B cell (primary cell): ENCODE measurements at regions of chr3 and their contacts with region 1.

Region 1: DNA sequence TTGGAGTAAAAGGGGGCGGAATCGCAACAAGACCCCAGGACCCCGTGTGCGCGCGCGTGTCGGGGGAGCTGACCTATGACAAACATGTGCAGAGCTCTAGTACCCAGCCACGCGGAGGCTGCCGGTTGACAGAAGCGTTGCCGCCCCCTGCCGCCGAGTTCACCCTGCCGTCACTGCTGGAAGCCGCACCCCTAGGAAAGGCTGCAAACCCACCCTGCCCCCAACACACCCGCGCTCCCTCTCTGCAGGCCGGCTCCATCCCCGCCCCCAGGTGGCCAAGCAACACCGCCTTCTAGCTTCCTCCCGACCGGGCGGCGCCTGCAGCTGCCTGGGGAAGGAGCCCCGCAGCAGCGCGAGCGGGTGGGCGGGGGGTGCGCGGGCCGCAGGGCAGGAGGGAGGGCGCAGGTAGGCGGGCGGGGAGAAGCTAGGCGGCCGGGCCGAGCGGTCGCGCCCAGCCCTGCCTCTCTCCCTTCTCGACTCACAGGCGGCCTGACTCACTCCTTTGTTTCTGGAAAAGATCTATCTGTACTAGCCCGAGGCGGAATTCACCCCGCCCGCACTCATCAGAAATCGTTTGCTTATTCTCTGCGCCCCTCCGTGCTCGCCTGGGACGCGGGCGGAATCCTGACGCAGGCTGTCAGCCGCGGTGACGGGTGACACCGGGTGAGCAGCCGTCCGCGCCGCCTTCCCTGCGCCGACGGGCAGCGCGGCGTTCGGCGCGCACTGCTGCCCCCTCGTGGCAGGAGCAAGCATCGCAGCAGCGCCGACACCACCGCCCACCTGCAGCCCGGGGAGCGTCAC is 160.8 kb downstream of the GAP43 start:
- DNase-seq: peak; percentile 94
- ATAC-seq: peak; percentile 81
- H3K4me3 ChIP-seq: peak overlapping the region in 4 of 5 experiments; percentile 60 to 74 (median 70)
- H3K4me3 Mint-ChIP-seq: peak overlapping the region; percentile 87
- H3K27ac ChIP-seq: peak overlapping the region; percentile 94 to 95
- H3K27ac Mint-ChIP-seq: peak overlapping the region; percentile 95
- H3K4me1 ChIP-seq: peaks cover 13 to 16% of the 10 kb centered on the region in 2 donors
- H3K4me1 Mint-ChIP-seq: peaks cover 15% of the 10 kb centered on the region
- H3K27me3 ChIP-seq: peaks cover 0 to 11% (median 4%) of the 10 kb centered on the region in 4 experiments
- H3K27me3 Mint-ChIP-seq: peaks cover 9% of the 10 kb centered on the region
- CTCF ChIP-seq: peak; percentile 95

Region 2: DNA sequence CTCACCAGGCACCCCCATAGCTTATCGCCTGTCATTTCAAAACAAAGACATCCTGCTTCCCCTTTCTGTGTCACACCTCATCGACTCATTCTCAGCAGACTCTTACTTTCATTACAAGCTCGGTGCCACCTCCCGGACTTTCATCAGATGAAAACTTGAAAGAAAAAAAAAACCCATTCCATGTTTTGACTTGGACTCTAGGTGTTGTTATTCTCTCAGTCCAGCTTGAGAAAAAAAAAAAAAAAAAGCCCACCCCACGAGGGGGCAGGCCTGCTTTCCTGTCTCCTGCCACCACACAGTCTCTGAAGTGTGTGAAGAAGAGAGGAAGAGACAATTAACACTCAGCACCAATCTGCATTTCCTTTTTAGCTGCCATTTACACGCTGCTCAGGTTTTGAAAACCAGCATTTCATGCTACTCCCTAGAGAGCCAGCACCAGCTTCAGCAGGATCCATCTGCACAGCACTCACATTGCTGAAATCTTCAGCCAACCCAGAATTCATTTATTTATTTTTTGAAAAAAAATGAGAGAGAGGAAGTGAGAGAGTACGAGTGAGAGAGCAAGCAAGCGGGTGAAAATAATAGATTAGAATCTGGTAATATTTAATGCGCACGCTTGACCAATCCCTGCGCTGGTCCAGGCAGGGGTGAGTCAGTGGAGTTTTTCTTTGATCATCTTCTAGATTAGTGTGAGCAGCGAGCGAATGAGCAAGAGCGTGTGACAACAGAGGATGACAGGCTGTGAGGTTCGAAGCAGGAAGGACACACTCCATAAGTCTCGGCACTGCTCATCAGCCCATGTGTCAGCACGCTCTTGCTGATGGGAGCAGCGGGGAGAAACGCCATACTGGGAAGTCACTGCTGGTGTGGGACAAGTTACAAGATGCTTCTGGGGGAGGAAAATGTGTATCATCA is 1570.3 kb before region 1 on chr3:
- CTCF ChIA-PET with region 1: no interaction called
- POLR2A ChIA-PET with region 1: no interaction called
- intact Hi-C with region 1: loop called (anchors 5 kb)
- DNase-seq: peak; percentile 92
- ATAC-seq: peak; percentile 76
- H3K4me3 ChIP-seq: peak overlapping the region; percentile 42 to 76 (median 69)
- H3K4me3 Mint-ChIP-seq: no peak overlapping the region
- H3K27ac ChIP-seq: peak overlapping the region; percentile 95 to 98
- H3K27ac Mint-ChIP-seq: no peak overlapping the region
- H3K4me1 ChIP-seq: peaks cover 66 to 71% of the 10 kb centered on the region in 2 donors
- H3K4me1 Mint-ChIP-seq: peaks cover 28% of the 10 kb centered on the region
- H3K27me3 ChIP-seq: no peaks in the 10 kb centered on the region
- H3K27me3 Mint-ChIP-seq: no peaks in the 10 kb centered on the region
- CTCF ChIP-seq: no peak

Region 3: DNA sequence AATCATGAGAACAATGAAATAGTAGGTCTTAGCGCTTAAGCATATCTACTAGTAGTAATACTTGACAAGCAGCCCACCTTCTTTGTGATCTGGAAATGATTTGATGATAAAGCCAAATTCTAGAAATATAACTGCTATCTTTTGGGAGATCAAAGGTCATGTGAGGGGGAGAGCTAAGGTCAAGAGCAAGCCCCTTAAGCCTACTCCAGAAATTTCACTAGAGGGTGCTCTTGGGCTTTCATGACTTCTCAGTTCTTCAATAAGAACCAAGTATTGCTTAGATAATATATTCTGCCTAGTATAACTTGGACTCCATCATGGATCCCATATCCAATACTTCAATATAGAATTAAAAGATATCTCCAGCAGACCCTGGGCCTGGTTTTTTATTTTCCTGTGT is 956.6 kb before region 1 on chr3:
- CTCF ChIA-PET with region 1: interaction called, 3 read pairs
- POLR2A ChIA-PET with region 1: no interaction called
- intact Hi-C with region 1: loop called (anchors 2 kb)
- DNase-seq: peak; percentile 49
- ATAC-seq: peak; percentile 31
- H3K4me3 ChIP-seq: no peak overlapping the region
- H3K4me3 Mint-ChIP-seq: no peak overlapping the region
- H3K27ac ChIP-seq: no peak overlapping the region
- H3K27ac Mint-ChIP-seq: no peak overlapping the region
- H3K4me1 ChIP-seq: no peaks in the 10 kb centered on the region
- H3K4me1 Mint-ChIP-seq: no peaks in the 10 kb centered on the region
- H3K27me3 ChIP-seq: no peaks in the 10 kb centered on the region
- H3K27me3 Mint-ChIP-seq: no peaks in the 10 kb centered on the region
- CTCF ChIP-seq: peak; percentile 62

Region 4: GRCh38 chr3:115092220-115092791 is 691.8 kb before region 1 on chr3:
- CTCF ChIA-PET with region 1: interaction called, 9 read pairs
- POLR2A ChIA-PET with region 1: no interaction called
- intact Hi-C with region 1: loop called (anchors 1 kb)
- DNase-seq: peak; percentile 69
- ATAC-seq: peak; percentile 33
- H3K4me3 ChIP-seq: no peak overlapping the region
- H3K4me3 Mint-ChIP-seq: no peak overlapping the region
- H3K27ac ChIP-seq: no peak overlapping the region
- H3K27ac Mint-ChIP-seq: no peak overlapping the region
- H3K4me1 ChIP-seq: no peaks in the 10 kb centered on the region
- H3K4me1 Mint-ChIP-seq: peaks cover 6% of the 10 kb centered on the region
- H3K27me3 ChIP-seq: no peaks in the 10 kb centered on the region
- H3K27me3 Mint-ChIP-seq: no peaks in the 10 kb centered on the region
- CTCF ChIP-seq: peak; percentile 82

Region 5: DNA sequence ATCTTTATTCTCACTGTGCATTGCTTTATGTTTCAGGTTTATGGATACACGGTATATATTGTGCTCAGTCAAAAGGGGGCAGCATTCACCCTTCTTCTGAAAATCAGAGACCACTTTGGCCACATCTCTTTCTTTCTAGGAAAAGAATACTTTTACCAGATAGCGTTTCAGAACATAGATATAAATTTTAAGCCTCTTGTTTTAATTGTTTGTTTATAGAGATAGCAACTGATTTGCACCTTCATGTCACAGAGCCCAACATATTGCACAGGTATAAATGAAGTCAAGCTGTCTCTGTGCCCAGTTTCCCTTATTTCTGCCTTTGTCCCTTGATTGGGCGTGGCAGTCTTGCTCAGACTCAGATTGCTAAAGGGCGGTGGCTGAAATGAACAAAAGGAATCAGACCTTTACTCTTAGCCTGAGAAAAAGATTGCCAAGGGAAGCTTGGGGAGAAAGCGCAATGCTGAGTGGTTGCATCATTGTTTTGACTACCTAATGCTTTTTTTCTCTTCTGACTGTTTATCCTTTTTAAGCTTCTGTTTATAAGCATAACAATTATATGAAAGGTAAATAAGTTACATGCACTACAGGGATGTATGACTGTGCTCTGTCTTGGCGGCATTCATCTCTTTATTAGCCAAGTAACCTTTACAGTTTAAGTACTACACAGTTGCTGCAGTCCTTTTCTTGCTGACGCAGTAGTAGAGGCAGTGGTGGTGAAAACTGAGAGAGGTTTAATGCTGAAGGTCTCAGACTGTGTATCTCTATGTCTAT is 566.3 kb before region 1 on chr3:
- CTCF ChIA-PET with region 1: interaction called, 20 read pairs
- POLR2A ChIA-PET with region 1: no interaction called
- intact Hi-C with region 1: loop called (anchors 1 kb)
- DNase-seq: peak; percentile 45
- ATAC-seq: no peak
- H3K4me3 ChIP-seq: no peak overlapping the region
- H3K4me3 Mint-ChIP-seq: no peak overlapping the region
- H3K27ac ChIP-seq: no peak overlapping the region
- H3K27ac Mint-ChIP-seq: no peak overlapping the region
- H3K4me1 ChIP-seq: peaks cover 5 to 6% of the 10 kb centered on the region in 2 donors
- H3K4me1 Mint-ChIP-seq: peaks cover 3% of the 10 kb centered on the region
- H3K27me3 ChIP-seq: peaks cover 0 to 7% (median 2%) of the 10 kb centered on the region in 4 experiments
- H3K27me3 Mint-ChIP-seq: peaks cover 23% of the 10 kb centered on the region
- CTCF ChIP-seq: peak; percentile 60

Region 6: DNA sequence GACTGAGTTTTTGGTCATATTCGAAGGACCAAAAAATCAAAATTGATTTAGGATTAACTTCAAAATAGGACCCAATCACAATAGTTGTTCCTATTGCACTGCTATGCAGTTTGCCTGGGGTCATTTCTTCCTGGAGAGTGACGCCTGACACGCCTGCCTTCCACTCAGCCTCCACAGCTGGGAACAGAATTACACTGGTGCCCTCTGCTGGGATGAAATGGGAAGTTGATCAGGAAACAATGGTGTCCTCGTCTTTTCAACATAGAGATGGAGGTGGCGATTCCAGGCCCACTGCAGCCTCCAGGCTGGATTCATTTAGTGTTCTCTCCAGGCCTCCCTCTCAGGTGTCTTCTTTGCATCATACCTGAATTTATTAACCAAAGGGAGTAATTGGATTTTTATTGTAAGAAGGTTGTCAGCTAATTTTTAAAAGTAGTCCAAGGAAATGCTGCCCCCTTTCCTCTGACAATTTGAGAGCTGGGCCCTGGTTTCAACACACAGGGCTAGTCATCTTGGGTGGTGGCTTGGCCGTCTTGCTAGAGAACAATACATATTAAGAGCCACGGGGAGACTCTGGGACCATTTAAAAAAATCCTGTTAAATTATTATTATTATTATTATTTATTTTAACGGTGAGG is 91.1 kb before region 1 on chr3:
- CTCF ChIA-PET with region 1: interaction called, 13 read pairs
- POLR2A ChIA-PET with region 1: no interaction called
- intact Hi-C with region 1: loop called (anchors 2 kb)
- DNase-seq: peak; percentile 79
- ATAC-seq: peak; percentile 94
- H3K4me3 ChIP-seq: no peak overlapping the region
- H3K4me3 Mint-ChIP-seq: no peak overlapping the region
- H3K27ac ChIP-seq: no peak overlapping the region
- H3K27ac Mint-ChIP-seq: no peak overlapping the region
- H3K4me1 ChIP-seq: no peaks in the 10 kb centered on the region
- H3K4me1 Mint-ChIP-seq: no peaks in the 10 kb centered on the region
- H3K27me3 ChIP-seq: no peaks in the 10 kb centered on the region
- H3K27me3 Mint-ChIP-seq: peaks cover 4% of the 10 kb centered on the region
- CTCF ChIP-seq: peak; percentile 85

Region 7: DNA sequence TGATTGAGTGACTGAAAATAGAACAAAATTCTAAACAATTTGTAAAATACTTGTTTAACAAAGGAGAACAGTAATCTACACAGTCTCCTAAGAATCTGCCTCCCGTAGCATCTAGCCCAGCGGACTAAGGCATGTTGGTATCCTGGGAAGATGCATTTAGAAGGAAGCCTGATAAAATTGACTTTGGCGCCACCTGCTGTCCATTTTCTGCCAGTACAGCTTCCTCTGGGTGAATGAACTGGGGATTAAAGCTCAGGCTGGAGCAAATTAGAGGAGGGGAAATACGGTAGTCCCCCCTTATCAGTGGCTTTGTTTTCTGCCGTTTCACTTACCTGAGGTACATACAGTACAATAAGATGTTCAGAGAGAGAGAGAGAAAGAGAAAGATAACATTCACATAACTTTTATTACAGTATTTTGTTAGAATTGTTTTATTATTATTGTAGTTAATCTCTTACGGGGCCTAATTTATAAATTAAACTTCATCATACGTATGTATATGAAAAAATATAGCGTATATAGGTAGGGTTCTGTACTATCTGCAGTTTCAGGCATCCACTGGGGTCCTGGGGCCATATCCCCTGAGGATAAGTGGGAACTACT is 30.7 kb after region 1 on chr3:
- CTCF ChIA-PET with region 1: interaction called, 12 read pairs
- POLR2A ChIA-PET with region 1: no interaction called
- intact Hi-C with region 1: loop called (anchors 2 kb)
- DNase-seq: peak; percentile 71
- ATAC-seq: peak; percentile 65
- H3K4me3 ChIP-seq: no peak overlapping the region
- H3K4me3 Mint-ChIP-seq: no peak overlapping the region
- H3K27ac ChIP-seq: no peak overlapping the region
- H3K27ac Mint-ChIP-seq: no peak overlapping the region
- H3K4me1 ChIP-seq: no peaks in the 10 kb centered on the region
- H3K4me1 Mint-ChIP-seq: no peaks in the 10 kb centered on the region
- H3K27me3 ChIP-seq: no peaks in the 10 kb centered on the region
- H3K27me3 Mint-ChIP-seq: no peaks in the 10 kb centered on the region
- CTCF ChIP-seq: peak; percentile 99

Region 8: GRCh38 chr3:115836944-115837343 is 52.8 kb after region 1 on chr3:
- CTCF ChIA-PET with region 1: no interaction called
- POLR2A ChIA-PET with region 1: no interaction called
- intact Hi-C with region 1: no loop called
- DNase-seq: peak; percentile 13
- ATAC-seq: no peak
- H3K4me3 ChIP-seq: no peak overlapping the region
- H3K4me3 Mint-ChIP-seq: no peak overlapping the region
- H3K27ac ChIP-seq: no peak overlapping the region
- H3K27ac Mint-ChIP-seq: no peak overlapping the region
- H3K4me1 ChIP-seq: no peaks in the 10 kb centered on the region
- H3K4me1 Mint-ChIP-seq: no peaks in the 10 kb centered on the region
- H3K27me3 ChIP-seq: peaks cover 0 to 4% (median 0%) of the 10 kb centered on the region in 4 experiments
- H3K27me3 Mint-ChIP-seq: peaks cover 3% of the 10 kb centered on the region
- CTCF ChIP-seq: peak; percentile 70

Region 9: GRCh38 chr3:116176974-116177555 is 392.9 kb after region 1 on chr3:
- CTCF ChIA-PET with region 1: no interaction called
- POLR2A ChIA-PET with region 1: no interaction called
- intact Hi-C with region 1: no loop called
- DNase-seq: no peak
- ATAC-seq: no peak
- H3K4me3 ChIP-seq: no peak overlapping the region
- H3K4me3 Mint-ChIP-seq: no peak overlapping the region
- H3K27ac ChIP-seq: no peak overlapping the region
- H3K27ac Mint-ChIP-seq: no peak overlapping the region
- H3K4me1 ChIP-seq: no peaks in the 10 kb centered on the region
- H3K4me1 Mint-ChIP-seq: no peaks in the 10 kb centered on the region
- H3K27me3 ChIP-seq: no peaks in the 10 kb centered on the region
- H3K27me3 Mint-ChIP-seq: no peaks in the 10 kb centered on the region
- CTCF ChIP-seq: no peak